Activated naive CD4-positive, alpha-beta T cell treated with anti-CD3 and anti-CD28 coated beads for 36 hours (primary cell): ENCODE measurements at regions of chr4 and their contacts with region 1.

Region 1: DNA sequence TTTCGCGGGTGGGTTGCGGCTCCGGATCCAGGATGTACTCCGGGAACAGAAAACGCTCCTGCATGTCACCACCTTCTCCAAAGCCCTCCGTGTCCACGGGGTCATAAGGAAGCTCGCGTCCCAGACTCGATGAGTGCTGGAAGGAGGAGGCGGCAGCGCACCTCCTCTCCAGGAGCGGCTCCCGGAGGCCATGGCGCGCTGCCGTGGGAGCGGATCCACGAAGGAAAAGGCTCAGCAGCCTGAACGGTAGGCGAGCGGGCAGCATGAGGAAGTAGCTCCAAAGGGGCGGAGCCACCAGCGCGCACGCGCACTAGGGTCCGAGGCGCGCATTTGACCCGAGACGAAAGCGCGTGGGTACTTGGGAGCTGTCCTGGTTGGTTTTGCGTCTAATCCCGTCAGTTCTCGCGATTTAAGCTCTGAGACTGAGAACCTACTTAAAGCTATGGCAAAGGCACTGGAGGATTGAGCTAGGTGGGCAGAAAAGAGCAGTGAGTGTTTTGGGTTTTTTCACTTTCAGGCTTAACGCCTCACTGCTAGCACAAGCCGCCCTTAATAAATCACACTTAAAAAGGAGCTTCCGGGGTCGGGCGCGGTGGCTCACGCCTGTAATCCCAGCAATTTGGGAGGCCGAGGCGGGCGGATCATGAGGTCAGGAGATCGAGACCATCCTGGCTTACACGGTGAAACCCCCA is at the start of gene NOA1:
- DNase-seq: peak; percentile 98
- H3K4me3 Mint-ChIP-seq: peak within 1 kb of the TSS; percentile 100
- H3K27ac Mint-ChIP-seq: peak within 1 kb of the TSS; percentile 99
- H3K4me1 Mint-ChIP-seq: peaks cover 51% of the 10 kb centered on the region
- H3K27me3 Mint-ChIP-seq: no peaks in the 10 kb centered on the region
- total RNA-seq, gene NOA1: 25.4 to 26.0 TPM

Region 2: GRCh38 chr4:55395529-55396307 is 1581.7 kb before region 1 on chr4 and contains the start of gene TMEM165:
- CTCF ChIA-PET with region 1: no interaction called
- intact Hi-C with region 1: loop called (anchors 2 kb)
- DNase-seq: peak; percentile 92
- H3K4me3 Mint-ChIP-seq: peak within 1 kb of the TSS; percentile 96
- H3K27ac Mint-ChIP-seq: peak within 1 kb of the TSS; percentile 89
- H3K4me1 Mint-ChIP-seq: peaks cover 39% of the 10 kb centered on the region
- H3K27me3 Mint-ChIP-seq: no peaks in the 10 kb centered on the region
- total RNA-seq, gene TMEM165: 39.1 to 40.6 TPM

Region 3: DNA sequence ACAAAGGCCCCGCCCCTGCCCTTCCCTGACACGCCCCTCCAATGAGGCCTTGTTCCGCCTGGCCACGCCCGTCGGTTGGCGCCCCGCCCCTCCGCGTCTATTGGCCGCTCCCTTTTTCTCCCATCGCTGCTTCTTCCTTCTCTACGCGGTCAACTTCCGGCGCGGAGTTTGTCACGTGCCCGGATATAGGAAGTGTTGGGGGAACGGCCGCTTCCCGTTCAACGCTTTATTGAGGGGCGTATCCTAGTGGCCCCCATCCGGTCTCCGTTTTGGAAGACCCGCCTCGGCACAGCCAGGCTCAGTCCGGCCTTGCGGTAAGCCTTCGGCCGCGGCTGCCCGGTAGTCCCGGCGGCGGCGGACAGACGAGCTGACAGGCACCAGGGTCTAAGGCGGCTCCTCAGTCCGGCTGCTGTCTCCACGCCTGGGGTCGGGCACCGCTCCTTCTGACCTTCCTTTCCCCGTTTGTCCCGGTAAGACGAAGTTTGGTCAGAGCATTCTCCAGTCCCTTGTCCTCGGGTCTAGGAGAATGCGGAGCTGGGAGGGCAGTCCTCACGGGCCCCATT is 1123.9 kb before region 1 on chr4 and contains the start of gene EXOC1:
- CTCF ChIA-PET with region 1: no interaction called
- intact Hi-C with region 1: loop called (anchors 10 kb)
- DNase-seq: peak; percentile 99
- H3K4me3 Mint-ChIP-seq: peak within 1 kb of the TSS; percentile 32
- H3K27ac Mint-ChIP-seq: peak within 1 kb of the TSS; percentile 86
- H3K4me1 Mint-ChIP-seq: peaks cover 28% of the 10 kb centered on the region
- H3K27me3 Mint-ChIP-seq: no peaks in the 10 kb centered on the region
- total RNA-seq, gene EXOC1: 18.7 to 21.9 TPM

Region 4: GRCh38 chr4:56467284-56468096 is 510.0 kb before region 1 on chr4 and contains the start of gene SRP72:
- CTCF ChIA-PET with region 1: no interaction called
- intact Hi-C with region 1: loop called (anchors 2 kb)
- DNase-seq: peak; percentile 91
- H3K4me3 Mint-ChIP-seq: peak within 1 kb of the TSS; percentile 100
- H3K27ac Mint-ChIP-seq: peak within 1 kb of the TSS; percentile 97
- H3K4me1 Mint-ChIP-seq: peaks cover 33% of the 10 kb centered on the region
- H3K27me3 Mint-ChIP-seq: no peaks in the 10 kb centered on the region
- total RNA-seq, gene SRP72: 200 to 212 TPM

Region 5: GRCh38 chr4:56782019-56782418 is 195.4 kb before region 1 on chr4:
- CTCF ChIA-PET with region 1: no interaction called
- intact Hi-C with region 1: no loop called
- DNase-seq: no peak
- H3K4me3 Mint-ChIP-seq: no peak overlapping the region
- H3K27ac Mint-ChIP-seq: no peak overlapping the region
- H3K4me1 Mint-ChIP-seq: no peaks in the 10 kb centered on the region
- H3K27me3 Mint-ChIP-seq: no peaks in the 10 kb centered on the region

Region 6: GRCh38 chr4:56907489-56908205 is 69.8 kb before region 1 on chr4 and contains the start of gene REST:
- CTCF ChIA-PET with region 1: interaction called, 5 read pairs
- intact Hi-C with region 1: loop called (anchors 1 kb)
- DNase-seq: peak; percentile 64
- H3K4me3 Mint-ChIP-seq: peak within 1 kb of the TSS; percentile 81
- H3K27ac Mint-ChIP-seq: peak within 1 kb of the TSS; percentile 65
- H3K4me1 Mint-ChIP-seq: peaks cover 43% of the 10 kb centered on the region
- H3K27me3 Mint-ChIP-seq: no peaks in the 10 kb centered on the region
- total RNA-seq, gene REST: 35.6 to 36.8 TPM

Region 7: DNA sequence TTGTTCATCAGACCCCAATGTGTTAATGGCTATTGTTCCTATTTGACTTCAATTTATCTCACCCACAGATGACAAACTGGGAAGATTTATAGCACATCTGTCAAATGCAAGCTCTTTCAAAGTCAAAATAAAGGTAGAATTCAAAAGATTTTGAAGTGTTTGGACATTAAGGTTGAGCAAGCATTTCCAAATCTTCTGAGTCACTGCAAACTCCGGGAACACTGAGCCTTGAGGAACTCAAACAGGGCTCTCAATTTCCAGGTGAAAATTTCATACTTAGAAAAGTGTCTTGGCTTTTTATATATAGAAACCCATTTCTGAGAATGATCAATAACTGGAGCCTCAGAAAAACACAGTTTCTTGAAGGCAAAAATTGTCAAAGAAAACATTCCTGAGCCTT is 332.2 kb after region 1 on chr4:
- CTCF ChIA-PET with region 1: no interaction called
- intact Hi-C with region 1: no loop called
- DNase-seq: no peak
- H3K4me3 Mint-ChIP-seq: no peak overlapping the region
- H3K27ac Mint-ChIP-seq: no peak overlapping the region
- H3K4me1 Mint-ChIP-seq: no peaks in the 10 kb centered on the region
- H3K27me3 Mint-ChIP-seq: peaks cover 2% of the 10 kb centered on the region